GM10248 (cell line): ENCODE measurements at regions of chr5 and their contacts with region 1.

Region 1: GRCh38 chr5:33649796-33650482 is 209.2 kb downstream of the TARS1 start:
- DNase-seq: no peak
- CTCF ChIP-seq: no peak

Region 2: GRCh38 chr5:33639474-33639873 is 10.5 kb before region 1 on chr5:
- CTCF ChIA-PET with region 1: interaction called, 17 read pairs
- POLR2A ChIA-PET with region 1: no interaction called
- DNase-seq: no peak
- CTCF ChIP-seq: no peak

Region 3: GRCh38 chr5:33662722-33663427 is 12.9 kb after region 1 on chr5:
- CTCF ChIA-PET with region 1: interaction called, 10 read pairs
- POLR2A ChIA-PET with region 1: no interaction called
- DNase-seq: no peak
- CTCF ChIP-seq: no peak

Region 4: GRCh38 chr5:33794550-33795181 is 144.7 kb after region 1 on chr5:
- CTCF ChIA-PET with region 1: no interaction called
- POLR2A ChIA-PET with region 1: no interaction called
- DNase-seq: no peak
- CTCF ChIP-seq: no peak